Breast epithelium (tissue), 4 donors: ENCODE measurements at regions of chr6 and their contacts with region 1.

Region 1: DNA sequence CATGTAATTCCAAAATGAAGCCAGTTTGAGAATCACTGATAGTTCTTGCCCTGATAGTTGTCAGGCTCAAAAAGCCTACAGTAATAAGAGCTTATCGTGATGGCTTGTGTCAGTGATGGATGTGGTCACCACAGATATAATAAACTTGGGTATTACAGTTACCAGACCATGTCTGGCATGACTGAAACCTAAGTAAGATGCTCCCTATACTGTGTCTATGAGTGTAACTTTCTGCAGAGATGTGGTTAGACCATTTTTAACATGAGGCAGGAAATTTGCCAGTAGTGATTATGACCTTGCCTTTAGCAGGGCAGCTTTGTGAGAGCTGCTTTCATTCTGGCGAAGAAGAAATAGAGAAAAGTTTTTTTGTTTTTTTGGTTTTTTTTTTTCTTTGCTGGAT is 90.2 kb downstream of the ANKS1A start:
- DNase-seq: no peak
- H3K4me3 ChIP-seq: no peak overlapping the region
- H3K27ac ChIP-seq: no peak overlapping the region
- H3K4me1 ChIP-seq: no peaks in the 10 kb centered on the region
- H3K27me3 ChIP-seq: no peaks in the 10 kb centered on the region
- CTCF ChIP-seq: no peak
- POLR2A ChIP-seq: no peak

Region 2: GRCh38 chr6:34358389-34358905 is 620.8 kb before region 1 on chr6:
- intact Hi-C with region 1: loop called (anchors 5 kb)
- DNase-seq: no peak
- H3K4me3 ChIP-seq: no peak overlapping the region
- H3K27ac ChIP-seq: no peak overlapping the region
- H3K4me1 ChIP-seq: peaks cover 0 to 10% of the 10 kb centered on the region in 2 donors
- H3K27me3 ChIP-seq: no peaks in the 10 kb centered on the region
- CTCF ChIP-seq: no peak
- POLR2A ChIP-seq: no peak